ENCODE measurements at regions of chr15 and their contacts with region 1.

Region 1: DNA sequence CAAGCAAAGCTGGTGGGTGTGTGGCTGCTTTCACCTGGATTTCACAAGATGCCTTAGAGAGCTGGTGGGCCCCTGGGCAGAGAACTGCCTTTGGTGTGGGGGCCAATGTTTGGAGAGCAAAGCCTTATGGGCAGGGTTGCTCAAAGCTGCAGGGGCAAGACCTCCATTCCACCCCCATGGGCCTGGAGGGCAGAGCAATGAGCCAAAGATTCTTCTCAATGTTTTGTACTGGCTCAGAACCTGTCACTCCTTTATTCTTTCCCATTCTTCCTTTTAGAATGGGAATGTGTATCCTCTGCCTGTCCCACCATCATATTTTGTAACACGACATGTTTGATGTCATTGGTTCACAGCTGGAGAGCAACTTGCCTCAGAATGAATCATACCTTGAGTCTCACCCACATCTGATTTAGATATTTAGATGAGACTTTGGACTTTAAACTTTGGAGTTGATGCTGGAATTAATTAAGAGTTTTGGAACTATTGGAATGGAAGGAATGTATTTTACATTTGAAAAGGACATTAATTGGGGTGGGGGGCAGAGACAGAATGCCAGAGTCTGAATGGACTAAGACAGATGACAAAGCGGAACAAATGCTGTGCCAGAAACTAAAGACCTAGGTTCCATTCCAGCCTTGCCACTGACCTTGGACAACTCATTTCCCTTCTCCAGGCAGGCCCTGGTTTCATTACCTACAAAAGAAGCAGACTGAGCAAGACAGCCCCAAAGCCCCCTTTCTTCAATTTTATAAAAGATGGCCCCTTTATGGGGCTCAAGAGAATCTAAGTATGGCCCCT is 72.9 kb downstream of the DAPK2 start:
- DNase-seq: no peak

Region 2: DNA sequence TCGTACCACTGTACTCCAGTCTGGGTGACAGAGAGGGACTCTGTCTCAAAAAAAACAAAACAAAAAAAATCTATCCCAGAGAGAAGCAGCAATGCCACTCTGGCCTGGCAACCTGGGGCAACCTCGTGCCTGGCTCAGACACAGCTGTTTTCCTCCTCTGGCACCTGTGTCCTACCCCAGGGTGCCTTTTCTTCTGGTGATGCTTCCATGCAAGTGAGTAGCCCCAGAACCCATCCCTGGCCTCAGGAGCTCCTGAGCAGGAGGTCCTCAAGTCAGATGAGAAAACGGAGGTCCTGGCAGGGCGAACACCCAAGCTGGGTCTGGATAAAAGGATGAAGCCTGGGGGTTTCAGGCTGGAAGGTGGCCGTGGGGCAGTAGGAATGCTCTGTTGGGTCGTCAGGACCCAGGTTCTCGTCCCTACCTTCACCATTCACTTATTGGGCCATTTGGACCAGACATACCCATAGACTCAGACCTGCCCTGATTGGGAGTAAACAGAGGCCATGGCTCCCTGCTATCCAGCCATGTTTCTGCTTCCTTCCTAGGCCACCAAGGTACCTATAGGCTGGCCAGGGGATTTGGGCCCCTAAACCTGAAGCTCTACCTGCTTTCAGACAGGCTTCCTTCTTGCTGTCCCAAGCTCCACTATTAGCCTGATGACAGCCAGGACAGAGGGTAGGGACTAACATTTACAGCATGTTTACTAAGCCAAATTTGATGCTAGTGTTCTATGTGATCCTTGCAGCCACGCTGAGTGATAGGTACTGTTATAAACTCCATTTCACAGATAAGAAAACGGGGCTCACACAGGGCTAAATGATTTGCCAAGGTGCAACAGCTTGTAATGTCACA is 29.4 kb before region 1 on chr15:
- intact Hi-C with region 1: loop called in 1 of 2 experiments (anchors 1 kb)
- DNase-seq: peak; percentile 40

Region 3: GRCh38 chr15:64153480-64154367 is 180.3 kb after region 1 on chr15:
- intact Hi-C with region 1: no loop called
- DNase-seq: peak; percentile 97